ENCODE measurements at regions of chr1 and their contacts with region 1.

Region 1: DNA sequence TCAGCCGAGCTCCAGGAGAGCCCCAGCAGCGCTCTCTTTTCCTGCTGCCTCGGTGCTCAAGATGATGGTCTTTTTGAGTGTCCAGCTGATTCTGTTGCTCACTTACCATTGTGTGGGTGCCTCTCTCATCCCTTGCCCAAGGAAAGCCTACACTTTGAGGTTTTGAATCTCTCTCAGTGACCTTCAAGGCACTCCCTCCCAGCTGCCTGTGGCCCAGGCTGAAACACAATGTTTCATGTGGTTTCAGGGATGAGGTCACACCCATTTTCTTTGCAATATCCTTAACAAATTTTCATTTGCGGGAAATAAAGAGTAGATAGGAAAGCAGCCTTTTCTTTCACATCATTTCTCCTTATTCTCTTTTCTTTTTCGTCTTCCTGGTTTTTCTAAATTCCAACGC is 12.6 kb upstream of the MRPS14 start:
- DNase-seq: no peak
- H3K4me3 Mint-ChIP-seq: no peak overlapping the region
- H3K27ac Mint-ChIP-seq: no peak overlapping the region
- H3K4me1 Mint-ChIP-seq: no peaks in the 10 kb centered on the region
- H3K27me3 Mint-ChIP-seq: peaks cover 20% of the 10 kb centered on the region

Region 2: DNA sequence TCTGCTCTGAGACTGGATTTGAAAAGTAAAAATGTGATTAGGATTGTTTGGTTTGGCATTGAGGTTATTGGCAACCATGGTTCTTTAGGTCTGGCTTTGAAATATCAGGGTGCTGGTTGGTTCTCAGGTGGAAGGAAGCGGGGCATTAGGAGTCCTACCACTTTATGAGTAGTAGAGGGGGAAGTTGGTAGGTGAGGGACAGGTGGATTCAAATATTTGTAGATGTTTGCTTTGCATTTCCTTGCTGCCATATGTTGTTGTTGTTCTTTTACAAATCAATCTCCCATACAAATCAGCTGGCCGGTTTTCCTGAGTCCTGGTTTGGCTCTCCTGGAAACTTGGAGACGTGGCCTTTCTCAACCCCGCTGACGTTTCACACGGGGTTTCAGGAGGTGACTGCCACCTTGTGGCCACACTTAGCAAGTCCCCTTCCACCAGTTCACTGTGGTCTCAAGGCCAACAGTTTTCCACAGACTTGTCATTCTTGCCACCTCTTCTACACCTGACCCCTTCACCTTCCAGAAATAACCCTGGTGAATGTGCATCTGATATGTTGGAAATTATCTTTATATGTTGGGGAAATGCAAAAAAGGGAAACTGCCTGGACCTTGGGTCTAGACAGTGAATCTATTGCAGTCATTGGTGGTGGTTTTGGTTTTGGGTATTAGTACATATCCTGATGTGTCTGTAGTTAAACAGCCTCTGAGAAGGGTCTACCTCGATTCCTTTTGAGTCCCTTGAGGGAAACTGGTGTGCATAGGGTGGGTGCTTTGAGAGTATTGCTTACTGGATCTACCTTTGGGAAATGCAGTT is 283.8 kb after region 1 on chr1:
- intact Hi-C with region 1: loop called (anchors 10 kb)
- DNase-seq: peak; percentile 48
- H3K4me3 Mint-ChIP-seq: no peak overlapping the region
- H3K27ac Mint-ChIP-seq: no peak overlapping the region
- H3K4me1 Mint-ChIP-seq: peaks cover 8% of the 10 kb centered on the region
- H3K27me3 Mint-ChIP-seq: peaks cover 6% of the 10 kb centered on the region